Endothelial cell of umbilical vein (primary cell): ENCODE measurements at regions of chr4 and their contacts with region 1.

Region 1: GRCh38 chr4:41024556-41025491 is 189.5 kb downstream of the APBB2 start:
- DNase-seq: peak; percentile 28
- H3K4me3 ChIP-seq: no peak overlapping the region
- H3K27ac ChIP-seq: no peak overlapping the region
- H3K4me1 ChIP-seq: peaks cover 15% of the 10 kb centered on the region
- H3K27me3 ChIP-seq: no peaks in the 10 kb centered on the region
- CTCF ChIP-seq: no peak
- POLR2A ChIP-seq: no peak

Region 2: GRCh38 chr4:40933272-40934053 is 91.4 kb before region 1 on chr4:
- CTCF ChIA-PET with region 1: no interaction called
- POLR2A ChIA-PET with region 1: no interaction called
- dilution Hi-C with region 1: no loop called
- intact Hi-C with region 1: no loop called
- DNase-seq: peak; percentile 79
- H3K4me3 ChIP-seq: no peak overlapping the region
- H3K27ac ChIP-seq: no peak overlapping the region
- H3K4me1 ChIP-seq: peaks cover 6% of the 10 kb centered on the region
- H3K27me3 ChIP-seq: no peaks in the 10 kb centered on the region
- CTCF ChIP-seq: no peak
- POLR2A ChIP-seq: no peak

Region 3: DNA sequence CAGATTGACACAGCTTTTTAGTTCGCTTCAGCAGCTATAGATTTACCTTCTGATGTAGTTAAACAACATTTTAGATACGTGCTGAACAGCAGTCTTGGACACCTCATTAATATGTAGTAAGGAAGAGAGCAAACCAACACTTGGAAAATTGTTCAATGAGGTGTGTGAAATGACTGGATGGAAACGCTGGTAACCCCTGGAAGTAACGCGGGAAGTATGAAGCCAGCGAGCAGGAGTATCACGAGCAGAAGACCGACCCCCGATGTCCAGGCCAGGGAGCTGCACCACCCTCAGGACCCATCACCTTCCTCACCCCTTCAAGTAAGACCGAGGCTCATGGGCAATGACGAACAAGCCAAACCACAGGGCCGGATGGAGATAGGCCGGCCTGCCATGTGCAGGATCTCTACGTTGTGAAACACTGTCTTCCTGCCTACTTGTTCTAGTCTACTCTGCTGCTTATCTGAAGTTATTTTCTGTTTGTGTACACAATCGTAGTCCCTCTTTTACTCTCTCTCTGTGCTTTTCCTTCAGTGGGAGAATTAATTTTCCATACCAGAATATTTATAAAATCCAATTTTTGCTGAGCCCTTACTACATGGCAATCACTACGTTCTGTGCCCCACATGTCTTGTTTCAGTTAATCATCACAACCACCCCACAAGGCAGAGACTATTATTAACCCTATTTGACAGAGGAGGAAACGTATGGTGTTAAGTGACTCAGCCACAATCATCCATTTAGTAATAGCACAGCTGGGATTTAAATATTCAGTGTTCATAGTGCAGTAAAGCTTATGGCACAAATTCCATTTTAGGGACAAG is 32.1 kb before region 1 on chr4:
- CTCF ChIA-PET with region 1: interaction called, 4 read pairs
- POLR2A ChIA-PET with region 1: no interaction called
- dilution Hi-C with region 1: no loop called
- intact Hi-C with region 1: loop called (anchors 2 kb)
- DNase-seq: peak; percentile 82
- H3K4me3 ChIP-seq: no peak overlapping the region
- H3K27ac ChIP-seq: peak overlapping the region; percentile 84
- H3K4me1 ChIP-seq: peaks cover 62% of the 10 kb centered on the region
- H3K27me3 ChIP-seq: no peaks in the 10 kb centered on the region
- CTCF ChIP-seq: no peak
- POLR2A ChIP-seq: no peak

Region 4: GRCh38 chr4:41189076-41189475 is 164.3 kb after region 1 on chr4:
- CTCF ChIA-PET with region 1: no interaction called
- POLR2A ChIA-PET with region 1: no interaction called
- dilution Hi-C with region 1: no loop called
- intact Hi-C with region 1: no loop called
- DNase-seq: no peak
- H3K4me3 ChIP-seq: no peak overlapping the region
- H3K27ac ChIP-seq: no peak overlapping the region
- H3K4me1 ChIP-seq: peaks cover 35% of the 10 kb centered on the region
- H3K27me3 ChIP-seq: no peaks in the 10 kb centered on the region
- CTCF ChIP-seq: no peak
- POLR2A ChIP-seq: no peak

Region 5: GRCh38 chr4:41287050-41287449 is 262.2 kb after region 1 on chr4:
- CTCF ChIA-PET with region 1: no interaction called
- POLR2A ChIA-PET with region 1: no interaction called
- dilution Hi-C with region 1: no loop called
- intact Hi-C with region 1: no loop called
- DNase-seq: peak; percentile 62
- H3K4me3 ChIP-seq: no peak overlapping the region
- H3K27ac ChIP-seq: no peak overlapping the region
- H3K4me1 ChIP-seq: peaks cover 2% of the 10 kb centered on the region
- H3K27me3 ChIP-seq: peaks cover 0 to 4% of the 10 kb centered on the region in 2 experiments
- CTCF ChIP-seq: no peak
- POLR2A ChIP-seq: no peak

Region 6: DNA sequence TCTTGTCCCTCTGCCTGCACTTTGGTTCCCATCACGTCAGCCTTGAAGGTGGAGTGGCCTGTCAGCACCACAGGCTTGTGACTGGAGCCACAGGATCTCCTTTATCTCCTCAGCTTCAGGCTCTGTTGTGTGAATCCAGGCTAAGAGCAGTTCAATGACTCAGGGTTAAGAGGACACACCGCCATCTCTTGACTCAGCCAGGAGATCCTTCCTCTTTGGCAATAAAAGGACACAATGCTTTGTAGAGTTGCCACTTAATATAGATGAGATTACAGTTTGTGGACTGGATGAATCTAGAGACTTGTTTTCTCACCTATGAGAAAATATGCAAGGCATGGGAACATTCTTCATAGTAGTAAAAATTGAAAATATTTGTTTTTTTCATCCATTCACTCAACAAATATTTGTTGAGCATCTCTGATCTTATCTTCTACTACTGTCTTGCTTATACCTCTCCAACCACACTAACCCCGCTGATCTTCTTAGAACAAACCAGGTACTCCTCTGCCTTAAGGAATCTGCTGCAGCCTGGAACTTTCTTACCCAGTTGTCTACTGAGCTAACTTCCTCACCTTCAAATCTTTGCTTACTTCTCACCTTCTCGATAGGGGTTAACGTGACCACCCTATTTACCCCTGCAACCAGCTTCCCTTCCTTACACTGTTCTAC is 294.2 kb after region 1 on chr4:
- CTCF ChIA-PET with region 1: no interaction called
- POLR2A ChIA-PET with region 1: no interaction called
- dilution Hi-C with region 1: no loop called
- intact Hi-C with region 1: no loop called
- DNase-seq: peak; percentile 62
- H3K4me3 ChIP-seq: no peak overlapping the region
- H3K27ac ChIP-seq: no peak overlapping the region
- H3K4me1 ChIP-seq: peaks cover 3% of the 10 kb centered on the region
- H3K27me3 ChIP-seq: peaks cover 0 to 6% of the 10 kb centered on the region in 2 experiments
- CTCF ChIP-seq: no peak
- POLR2A ChIP-seq: no peak